OCI-LY7 (cell line): ENCODE measurements at regions of chr11 and their contacts with region 1.

Region 1: DNA sequence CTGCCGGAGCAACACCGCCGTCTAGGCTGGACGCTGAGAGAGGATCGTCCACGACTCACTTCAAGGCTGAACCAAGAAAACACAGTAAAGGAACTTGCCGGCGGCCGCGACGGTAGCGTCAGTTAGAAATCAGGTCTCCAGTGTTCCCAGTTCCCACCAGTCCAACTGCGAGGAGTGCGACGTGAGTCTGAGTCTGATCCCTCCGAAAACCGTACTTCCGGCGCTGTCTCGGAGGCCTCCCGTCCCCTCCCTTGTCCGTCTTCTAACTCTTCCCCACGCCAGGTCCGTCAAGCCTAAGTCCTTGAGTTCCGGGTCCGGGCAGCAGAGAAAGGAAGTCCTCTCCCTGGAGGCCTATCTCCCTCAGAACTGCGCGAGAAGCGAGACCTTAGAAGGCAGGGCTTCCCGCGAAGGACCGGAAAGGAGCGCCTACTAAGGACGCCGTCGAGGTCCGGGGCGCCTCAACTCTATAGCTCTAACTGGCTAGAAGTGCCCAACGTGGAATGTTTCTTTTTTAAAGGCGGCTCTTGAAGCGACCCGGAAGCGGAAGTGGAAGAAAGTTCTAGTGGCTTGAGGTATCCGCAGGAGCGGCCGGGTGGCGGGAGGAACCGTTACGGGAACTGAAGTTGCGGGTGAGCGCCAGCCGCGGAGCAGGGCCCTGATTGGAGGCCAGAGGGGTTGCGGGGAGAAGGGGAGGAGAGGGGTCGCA is at the starts of genes BANF1 and EIF1AD:
- DNase-seq: peak; percentile 98
- H3K4me3 ChIP-seq: peak within 1 kb of the TSS; percentile 89
- H3K27ac ChIP-seq: peak within 1 kb of the TSS; percentile 93
- H3K4me1 ChIP-seq: peaks cover 33% of the 10 kb centered on the region
- CTCF ChIP-seq: no peak
- total RNA-seq, gene BANF1: 70.6 and 82.2 TPM in 2 replicates
- total RNA-seq, gene EIF1AD: 51.1 and 65.9 TPM in 2 replicates

Region 2: GRCh38 chr11:65711785-65712632 is 290.1 kb before region 1 on chr11 and contains the start of gene KAT5:
- CTCF ChIA-PET with region 1: no interaction called
- POLR2A ChIA-PET with region 1: no interaction called
- intact Hi-C with region 1: loop called (anchors 5 kb)
- DNase-seq: peak; percentile 99
- H3K4me3 ChIP-seq: peak within 1 kb of the TSS; percentile 89
- H3K27ac ChIP-seq: peak within 1 kb of the TSS; percentile 82
- H3K4me1 ChIP-seq: peaks cover 19% of the 10 kb centered on the region
- CTCF ChIP-seq: peak; percentile 86
- total RNA-seq, gene KAT5: 87.9 and 97.1 TPM in 2 replicates

Region 3: GRCh38 chr11:65919146-65920033 is 82.7 kb before region 1 on chr11 and contains the start of gene DRAP1:
- CTCF ChIA-PET with region 1: no interaction called
- POLR2A ChIA-PET with region 1: no interaction called
- intact Hi-C with region 1: loop called (anchors 1 kb)
- DNase-seq: peak; percentile 99
- H3K4me3 ChIP-seq: peak within 1 kb of the TSS; percentile 85
- H3K27ac ChIP-seq: peak within 1 kb of the TSS; percentile 54
- H3K4me1 ChIP-seq: peaks cover 22% of the 10 kb centered on the region
- CTCF ChIP-seq: no peak
- total RNA-seq, gene DRAP1: 93.2 and 110 TPM in 2 replicates

Region 4: GRCh38 chr11:65961232-65961901 is 40.7 kb before region 1 on chr11 and contains the start of gene SART1:
- CTCF ChIA-PET with region 1: no interaction called
- POLR2A ChIA-PET with region 1: no interaction called
- intact Hi-C with region 1: loop called (anchors 1 kb)
- DNase-seq: peak; percentile 99
- H3K4me3 ChIP-seq: peak within 1 kb of the TSS; percentile 89
- H3K27ac ChIP-seq: peak within 1 kb of the TSS; percentile 69
- H3K4me1 ChIP-seq: peaks cover 26% of the 10 kb centered on the region
- CTCF ChIP-seq: no peak
- total RNA-seq, gene SART1: 50.4 and 93.8 TPM in 2 replicates

Region 5: DNA sequence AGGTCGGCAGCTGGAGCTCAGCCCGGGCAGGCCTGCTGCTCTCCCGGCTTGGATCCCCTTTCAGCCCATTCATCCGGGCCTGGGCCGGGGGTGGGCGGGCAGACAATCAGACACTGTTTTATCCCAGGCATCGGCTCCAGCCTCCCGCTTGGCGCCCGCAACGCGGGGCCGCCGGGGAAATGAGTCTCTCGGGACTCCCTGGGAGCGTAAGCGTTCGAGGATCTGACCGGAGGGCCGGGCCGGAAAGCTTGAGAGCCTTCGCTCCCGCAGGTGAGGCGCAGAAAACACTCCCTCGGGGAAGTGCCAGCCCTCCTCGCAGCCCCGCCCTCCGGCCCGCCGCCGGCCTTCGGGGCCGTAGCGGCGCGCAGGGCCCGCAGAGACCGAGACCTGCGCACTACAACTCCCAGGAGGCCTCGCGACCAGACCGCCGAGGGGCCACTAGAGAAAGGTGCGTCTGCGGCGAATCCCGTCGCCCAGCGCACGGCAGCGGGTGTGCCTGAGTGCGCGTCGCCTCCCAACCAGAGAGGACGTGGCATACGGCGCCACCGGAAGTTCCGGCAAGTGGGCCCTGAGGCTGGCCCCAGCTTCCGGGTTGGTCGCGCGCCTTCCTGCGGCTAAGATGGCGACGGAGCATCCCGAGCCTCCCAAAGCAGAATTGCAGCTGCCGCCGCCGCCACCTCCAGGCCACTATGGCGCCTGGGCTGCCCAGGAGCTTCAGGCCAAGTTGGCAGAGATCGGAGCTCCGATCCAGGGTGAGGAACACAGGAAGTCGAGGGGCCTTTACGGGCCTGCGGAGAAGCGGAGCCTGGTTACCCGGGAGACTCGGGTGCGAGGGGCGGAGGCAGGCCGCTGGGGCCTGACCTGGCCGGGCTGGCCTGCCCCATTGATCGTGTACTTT is 49.9 kb after region 1 on chr11 and contains the start of gene SF3B2:
- CTCF ChIA-PET with region 1: interaction called, 3 read pairs
- POLR2A ChIA-PET with region 1: no interaction called
- intact Hi-C with region 1: loop called (anchors 5 kb)
- DNase-seq: peak; percentile 99
- H3K4me3 ChIP-seq: peak within 1 kb of the TSS; percentile 83
- H3K27ac ChIP-seq: peak within 1 kb of the TSS; percentile 60
- H3K4me1 ChIP-seq: peaks cover 21% of the 10 kb centered on the region
- CTCF ChIP-seq: no peak
- total RNA-seq, gene SF3B2: 185 and 191 TPM in 2 replicates

Region 6: DNA sequence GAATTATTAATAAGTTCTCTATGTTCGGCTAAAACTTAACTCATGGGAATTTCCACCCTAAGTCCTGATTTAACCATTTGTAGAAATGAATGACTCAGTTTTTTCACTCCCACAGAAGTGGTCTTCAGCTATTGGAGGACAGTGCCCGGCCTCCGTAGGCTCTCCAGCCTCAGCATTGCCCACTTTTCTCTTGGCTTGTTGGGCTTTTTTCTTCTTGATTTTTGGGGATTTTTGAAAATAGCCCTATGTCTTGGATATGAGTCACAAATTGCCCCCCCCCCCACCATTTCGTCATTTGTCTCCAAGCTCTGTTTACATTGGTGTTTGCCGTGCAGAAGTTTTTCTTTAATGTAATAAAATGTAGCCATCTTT is 134.6 kb after region 1 on chr11:
- CTCF ChIA-PET with region 1: no interaction called
- POLR2A ChIA-PET with region 1: no interaction called
- intact Hi-C with region 1: loop called (anchors 5 kb)
- DNase-seq: no peak
- H3K4me3 ChIP-seq: no peak overlapping the region
- H3K27ac ChIP-seq: no peak overlapping the region
- H3K4me1 ChIP-seq: peaks cover 59% of the 10 kb centered on the region
- CTCF ChIP-seq: no peak

Region 7: GRCh38 chr11:66268283-66268951 is 266.3 kb after region 1 on chr11 and contains the start of gene RAB1B:
- CTCF ChIA-PET with region 1: no interaction called
- POLR2A ChIA-PET with region 1: no interaction called
- intact Hi-C with region 1: loop called (anchors 5 kb)
- DNase-seq: peak; percentile 100
- H3K4me3 ChIP-seq: peak within 1 kb of the TSS; percentile 100
- H3K27ac ChIP-seq: peak within 1 kb of the TSS; percentile 84
- H3K4me1 ChIP-seq: peaks cover 24% of the 10 kb centered on the region
- CTCF ChIP-seq: no peak
- total RNA-seq, gene RAB1B: 69.2 and 77.7 TPM in 2 replicates